Activated T-helper 2 cell treated with anti-CD3 and anti-CD28 coated beads, Interferon-gamma antibody, Interleukin-2, Interleukin-4, amounts not matched to agents 10 μg/mL and 5 μg/mL and 100 μg/mL, durations not matched to agents 14 hours and 24 hours and 36 hours (primary cell): ENCODE measurements at regions of chr6 and their contacts with region 1.

Region 1: DNA sequence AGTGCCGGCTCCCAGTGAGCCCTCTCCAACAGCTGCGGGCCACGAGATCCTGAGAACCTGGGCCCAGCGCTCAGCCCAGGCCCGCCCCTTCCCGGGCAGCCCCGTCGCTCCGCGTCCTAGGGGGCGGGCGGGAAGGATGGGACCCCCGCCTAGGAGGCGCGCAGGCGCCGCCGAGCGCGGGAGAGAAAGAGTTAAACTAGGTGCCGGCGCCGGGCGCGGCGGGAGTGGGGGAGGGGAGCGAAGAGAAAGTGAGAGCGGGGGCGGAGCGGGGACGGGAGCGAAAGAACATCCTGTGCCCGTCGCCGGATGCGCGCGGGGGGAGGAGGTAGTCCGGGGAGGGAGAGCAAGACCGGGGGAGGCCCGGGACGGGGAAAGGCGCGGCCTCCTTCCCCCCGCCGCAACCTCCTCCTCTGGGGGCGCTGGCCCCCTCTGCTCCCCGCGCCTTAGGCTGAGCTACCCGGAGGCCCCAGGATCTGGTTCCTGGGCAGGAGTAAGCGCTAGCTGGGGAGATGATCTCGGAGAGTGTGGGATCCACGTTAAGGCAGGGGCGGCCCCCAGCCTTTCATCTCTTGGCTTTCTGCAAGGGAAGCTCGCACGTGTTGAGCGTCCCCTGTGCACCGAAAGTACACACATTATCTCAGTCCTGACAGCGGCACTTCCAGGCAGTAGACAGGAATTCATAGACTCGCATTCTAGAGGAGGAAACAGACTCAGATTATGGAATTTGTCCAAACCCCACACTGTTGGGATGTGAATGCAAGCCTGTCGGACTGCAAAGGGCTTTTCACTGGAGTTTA is 4.9 kb upstream of the ARMC12 start:
- DNase-seq: peak; percentile 94
- H3K4me3 Mint-ChIP-seq: peak overlapping the region; percentile 82
- H3K27ac Mint-ChIP-seq: peak overlapping the region; percentile 86
- H3K4me1 Mint-ChIP-seq: peaks cover 55% of the 10 kb centered on the region
- H3K27me3 Mint-ChIP-seq: no peaks in the 10 kb centered on the region

Region 2: GRCh38 chr6:35533981-35534380 is 198.0 kb before region 1 on chr6:
- intact Hi-C with region 1: no loop called
- DNase-seq: no peak
- H3K4me3 Mint-ChIP-seq: no peak overlapping the region
- H3K27ac Mint-ChIP-seq: no peak overlapping the region
- H3K4me1 Mint-ChIP-seq: no peaks in the 10 kb centered on the region
- H3K27me3 Mint-ChIP-seq: peaks cover 17% of the 10 kb centered on the region

Region 3: DNA sequence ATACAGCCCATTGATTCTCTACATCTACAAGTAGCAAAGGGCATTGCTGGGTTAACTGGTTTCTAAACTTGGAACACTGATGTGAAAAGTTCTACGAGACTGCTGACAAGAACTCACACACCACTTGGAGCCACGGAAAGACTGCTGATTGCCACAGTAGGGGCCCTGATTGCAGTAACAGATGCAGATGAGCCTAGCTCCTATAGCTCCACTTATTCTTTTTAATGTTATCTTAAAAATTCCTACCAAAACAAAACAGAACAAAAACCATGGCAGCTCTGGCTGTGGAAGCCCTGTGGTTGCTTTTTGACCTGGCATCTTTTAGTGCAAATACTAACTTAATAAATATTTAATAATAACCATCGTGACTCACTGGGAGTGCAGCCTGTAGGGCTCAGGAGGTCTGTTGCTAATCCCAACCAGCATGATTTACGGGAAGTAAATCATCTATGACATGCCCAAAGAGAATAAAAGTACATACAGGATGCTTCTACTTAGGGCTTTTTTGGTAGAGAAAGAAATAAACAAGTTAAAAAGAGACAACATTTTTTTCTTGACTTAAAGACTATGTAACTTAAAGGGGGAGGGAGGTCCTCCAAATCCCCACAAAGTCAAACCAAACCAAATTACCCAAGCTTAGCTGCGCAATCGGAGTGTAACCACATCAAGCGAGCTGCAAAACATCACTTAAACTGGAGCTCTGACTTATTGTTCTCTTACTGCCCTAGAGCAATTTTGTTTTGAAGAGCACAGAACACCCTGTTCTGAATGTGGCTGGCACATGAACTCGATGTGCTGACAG is 130.4 kb before region 1 on chr6:
- intact Hi-C with region 1: loop called (anchors 5 kb)
- DNase-seq: peak; percentile 41
- H3K4me3 Mint-ChIP-seq: peak overlapping the region; percentile 59
- H3K27ac Mint-ChIP-seq: peak overlapping the region; percentile 74
- H3K4me1 Mint-ChIP-seq: peaks cover 48% of the 10 kb centered on the region
- H3K27me3 Mint-ChIP-seq: no peaks in the 10 kb centered on the region

Region 4: GRCh38 chr6:35681298-35681697 is 50.6 kb before region 1 on chr6:
- intact Hi-C with region 1: loop called (anchors 1 kb)
- DNase-seq: no peak
- H3K4me3 Mint-ChIP-seq: no peak overlapping the region
- H3K27ac Mint-ChIP-seq: peak overlapping the region; percentile 20
- H3K4me1 Mint-ChIP-seq: peaks cover 45% of the 10 kb centered on the region
- H3K27me3 Mint-ChIP-seq: no peaks in the 10 kb centered on the region

Region 5: GRCh38 chr6:35710241-35710847 is 21.6 kb before region 1 on chr6:
- intact Hi-C with region 1: loop called (anchors 1 kb)
- DNase-seq: no peak
- H3K4me3 Mint-ChIP-seq: peak overlapping the region; percentile 0
- H3K27ac Mint-ChIP-seq: peak overlapping the region; percentile 75
- H3K4me1 Mint-ChIP-seq: peaks cover 26% of the 10 kb centered on the region
- H3K27me3 Mint-ChIP-seq: no peaks in the 10 kb centered on the region

Region 6: DNA sequence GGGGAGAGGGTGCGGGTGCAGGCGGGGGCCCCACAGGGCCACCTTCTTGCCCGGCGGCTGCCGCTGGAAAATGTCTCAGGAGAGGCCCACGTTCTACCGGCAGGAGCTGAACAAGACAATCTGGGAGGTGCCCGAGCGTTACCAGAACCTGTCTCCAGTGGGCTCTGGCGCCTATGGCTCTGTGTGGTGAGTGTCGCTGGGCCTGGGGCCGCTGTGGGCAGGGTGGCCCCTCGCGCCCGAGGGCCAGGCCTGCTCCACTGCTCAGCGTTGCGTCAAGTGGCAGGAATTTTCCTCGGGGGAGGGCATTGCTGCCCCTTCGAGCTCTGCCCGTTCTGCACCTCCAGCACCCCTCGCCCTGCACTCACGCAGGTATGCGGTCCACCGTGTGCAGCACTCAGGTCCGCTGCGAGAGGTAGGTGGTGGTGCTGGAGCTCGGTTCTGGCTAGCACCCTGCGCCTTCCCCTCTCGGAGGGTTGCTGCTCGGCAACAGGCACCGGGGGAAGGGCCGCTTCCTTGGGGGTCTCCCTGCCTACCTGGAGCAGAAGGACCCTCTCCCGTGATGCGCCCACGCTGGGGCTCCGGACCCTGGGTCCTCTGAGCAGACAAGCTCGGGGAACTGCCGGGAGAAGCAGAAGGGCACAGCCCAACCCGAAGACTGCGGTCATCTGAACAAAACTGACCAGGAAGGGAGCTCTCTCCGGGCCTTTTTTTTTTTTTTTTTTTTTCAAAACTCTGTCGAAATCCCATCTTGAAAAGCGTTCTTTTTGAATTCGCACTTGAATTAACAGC is 296.3 kb after region 1 on chr6:
- intact Hi-C with region 1: no loop called
- DNase-seq: no peak
- H3K4me3 Mint-ChIP-seq: peak overlapping the region; percentile 95
- H3K27ac Mint-ChIP-seq: peak overlapping the region; percentile 89
- H3K4me1 Mint-ChIP-seq: peaks cover 36% of the 10 kb centered on the region
- H3K27me3 Mint-ChIP-seq: peaks cover 21% of the 10 kb centered on the region